Naive thymus-derived CD4-positive, alpha-beta T cell (primary cell): ENCODE measurements at regions of chr16 and their contacts with region 1.

Region 1: DNA sequence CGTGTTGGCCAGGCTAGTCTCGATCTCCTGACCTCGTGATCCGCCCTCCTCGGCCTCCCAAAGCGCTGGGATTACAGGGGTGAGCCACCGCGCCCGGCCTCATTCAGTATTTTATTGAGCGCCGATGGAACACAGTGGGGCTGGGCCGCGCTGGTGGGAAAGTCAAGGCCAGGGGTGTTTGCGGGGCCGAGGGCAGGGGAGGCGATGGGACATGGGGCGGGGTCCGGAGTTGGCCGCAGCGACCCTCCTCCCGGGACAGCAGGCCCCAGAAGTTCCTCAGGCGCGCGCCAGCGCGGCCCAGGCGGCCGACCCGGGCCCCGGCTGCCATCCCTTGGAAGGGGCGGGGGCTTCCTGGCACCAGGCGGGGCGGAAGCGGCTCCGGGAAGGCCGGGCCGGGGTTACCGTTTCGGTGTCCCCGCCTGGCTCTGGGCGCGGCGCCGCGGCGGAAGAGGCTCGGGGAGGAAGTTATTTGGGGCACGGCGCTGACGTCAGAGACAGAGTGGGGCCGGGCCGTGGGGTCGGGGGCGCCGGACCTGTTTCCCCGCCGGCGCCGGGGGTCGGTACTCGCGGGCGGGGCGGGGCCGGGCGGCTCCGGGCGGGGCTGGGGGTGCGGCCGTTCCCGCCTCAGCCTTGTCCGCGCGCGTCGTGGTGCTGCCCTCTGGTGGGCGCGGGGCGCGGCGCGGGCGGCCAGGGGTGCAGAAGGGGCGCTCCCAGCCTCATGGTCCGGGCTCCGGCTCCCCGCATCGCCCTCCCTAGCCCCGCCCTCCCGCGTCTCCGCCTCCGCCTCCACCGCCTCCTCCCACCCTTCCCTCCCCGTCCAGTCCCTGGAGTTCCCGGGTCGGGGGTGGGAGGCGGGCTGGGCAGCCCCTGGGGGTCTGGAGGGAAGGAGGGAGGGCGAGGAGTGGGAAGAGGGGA is 952 bp upstream of the PRSS27 start:
- DNase-seq: peak; percentile 74 to 91 (median 85)
- ATAC-seq: peak; percentile 95
- H3K4me3 ChIP-seq: peak overlapping the region; percentile 37
- H3K4me3 Mint-ChIP-seq: peak overlapping the region; percentile 55 to 82 (median 76)
- H3K27ac ChIP-seq: peak overlapping the region; percentile 74
- H3K27ac Mint-ChIP-seq: peak overlapping the region in 7 of 9 donors; percentile 38 to 90 (median 64)
- H3K4me1 ChIP-seq: no peaks in the 10 kb centered on the region
- H3K4me1 Mint-ChIP-seq: peaks cover 0 to 5% (median 0%) of the 10 kb centered on the region in 7 donors
- H3K27me3 ChIP-seq: no peaks in the 10 kb centered on the region
- H3K27me3 Mint-ChIP-seq: peaks cover 9 to 14% (median 10%) of the 10 kb centered on the region in 5 donors

Region 2: GRCh38 chr16:2531767-2532493 is 189.0 kb before region 1 on chr16:
- CTCF ChIA-PET with region 1: no interaction called
- POLR2A ChIA-PET with region 1: no interaction called
- intact Hi-C with region 1: loop called in 1 of 2 experiments (anchors 1 kb)
- DNase-seq: peak; percentile 94 to 97 (median 96)
- ATAC-seq: peak; percentile 93
- H3K4me3 ChIP-seq: peak overlapping the region; percentile 71
- H3K4me3 Mint-ChIP-seq: peak overlapping the region; percentile 84 to 100 (median 96)
- H3K27ac ChIP-seq: peak overlapping the region; percentile 93
- H3K27ac Mint-ChIP-seq: peak overlapping the region; percentile 96 to 100 (median 98)
- H3K4me1 ChIP-seq: peaks cover 5 to 7% of the 10 kb centered on the region in 2 donors
- H3K4me1 Mint-ChIP-seq: peaks cover 0 to 31% (median 20%) of the 10 kb centered on the region in 7 donors
- H3K27me3 ChIP-seq: no peaks in the 10 kb centered on the region
- H3K27me3 Mint-ChIP-seq: no peaks in the 10 kb centered on the region

Region 3: DNA sequence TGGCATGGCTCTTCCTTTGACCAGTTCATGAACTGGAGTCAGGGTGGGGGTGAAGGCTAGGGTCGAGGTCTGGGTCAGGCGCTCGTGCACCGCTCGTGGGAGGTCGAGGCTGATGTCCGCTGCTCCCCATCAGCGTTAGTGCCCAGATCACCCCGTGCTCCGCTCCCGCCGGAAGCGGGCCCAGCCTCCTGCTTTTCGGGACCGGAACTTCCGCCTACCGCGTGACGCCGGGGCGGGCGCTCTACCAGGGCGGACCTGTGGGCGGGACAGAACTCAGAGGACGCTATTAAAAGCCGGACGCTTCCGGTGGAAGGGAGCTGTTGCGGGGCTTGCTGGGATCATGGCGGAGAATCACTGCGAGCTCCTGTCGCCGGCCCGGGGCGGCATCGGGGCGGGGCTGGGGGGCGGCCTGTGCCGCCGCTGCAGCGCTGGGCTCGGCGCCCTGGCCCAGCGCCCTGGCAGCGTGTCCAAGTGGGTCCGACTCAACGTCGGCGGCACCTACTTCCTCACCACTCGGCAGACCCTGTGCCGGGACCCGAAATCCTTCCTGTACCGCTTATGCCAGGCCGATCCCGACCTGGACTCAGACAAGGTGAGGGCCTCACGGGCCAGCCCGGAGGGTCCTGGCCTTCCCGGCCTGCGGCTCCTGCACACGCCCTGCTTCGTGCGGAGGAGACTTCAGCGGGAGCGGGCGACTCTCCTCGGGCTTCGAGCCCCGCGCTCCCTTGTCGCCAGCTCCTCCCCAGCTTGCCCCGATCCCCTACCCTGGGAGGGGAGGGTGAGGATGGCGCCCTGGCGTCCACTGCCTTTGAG is 38.6 kb before region 1 on chr16 and contains the start of gene KCTD5:
- CTCF ChIA-PET with region 1: no interaction called
- POLR2A ChIA-PET with region 1: interaction called, 4 read pairs
- intact Hi-C with region 1: loop called (anchors 1 kb)
- DNase-seq: peak; percentile 89 to 98 (median 94)
- ATAC-seq: peak; percentile 97
- H3K4me3 ChIP-seq: peak within 1 kb of the TSS; percentile 81
- H3K4me3 Mint-ChIP-seq: peak within 1 kb of the TSS; percentile 89 to 99 (median 94)
- H3K27ac ChIP-seq: peak within 1 kb of the TSS; percentile 92
- H3K27ac Mint-ChIP-seq: peak within 1 kb of the TSS; percentile 82 to 99 (median 94)
- H3K4me1 ChIP-seq: peaks cover 8 to 18% of the 10 kb centered on the region in 2 donors
- H3K4me1 Mint-ChIP-seq: peaks cover 12 to 29% (median 25%) of the 10 kb centered on the region in 7 donors
- H3K27me3 ChIP-seq: no peaks in the 10 kb centered on the region
- H3K27me3 Mint-ChIP-seq: no peaks in the 10 kb centered on the region
- total RNA-seq, gene KCTD5: 21.4 to 37.5 (median 24.6) TPM

Region 4: DNA sequence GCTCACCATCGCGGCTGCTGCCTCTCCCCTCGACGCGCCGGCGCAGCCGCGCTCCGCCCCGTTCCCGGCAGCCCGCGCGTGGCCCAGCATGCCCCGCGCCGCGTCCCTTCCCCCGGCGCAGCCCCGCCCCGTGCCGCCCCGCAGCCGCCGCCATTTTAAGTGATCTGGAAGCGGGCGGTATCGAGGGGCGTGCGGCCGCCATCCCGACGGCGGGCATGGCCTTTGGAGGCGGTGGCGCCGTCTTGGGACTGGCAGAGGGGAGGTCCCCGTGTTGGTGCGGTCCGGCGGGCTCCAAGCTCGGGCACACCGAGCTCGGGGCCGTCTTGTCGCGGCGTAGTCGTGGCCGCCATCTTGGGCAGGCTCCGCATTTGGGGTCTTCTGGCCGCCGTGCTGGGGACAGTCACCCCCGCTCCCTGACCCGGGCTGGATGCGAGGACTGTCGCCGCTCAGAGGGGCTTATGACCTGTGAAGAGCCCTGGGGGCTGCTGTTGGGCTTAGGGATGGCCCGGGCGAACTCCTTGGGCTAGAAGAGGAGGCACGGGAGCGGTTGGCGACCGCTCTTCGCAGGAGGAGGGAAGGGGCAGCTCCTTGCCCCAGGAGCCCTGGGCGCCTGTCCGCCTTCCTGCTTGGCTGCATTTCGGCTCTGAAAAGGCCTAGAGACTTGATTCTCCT is 56.4 kb after region 1 on chr16 and contains the start of gene ELOB:
- CTCF ChIA-PET with region 1: no interaction called
- POLR2A ChIA-PET with region 1: no interaction called
- intact Hi-C with region 1: loop called in 1 of 2 experiments (anchors 1 kb)
- DNase-seq: peak; percentile 81 to 95 (median 90)
- ATAC-seq: peak; percentile 95
- H3K4me3 ChIP-seq: peak within 1 kb of the TSS; percentile 93
- H3K4me3 Mint-ChIP-seq: peak within 1 kb of the TSS; percentile 93 to 97 (median 96)
- H3K27ac ChIP-seq: peak within 1 kb of the TSS; percentile 99
- H3K27ac Mint-ChIP-seq: peak within 1 kb of the TSS; percentile 96 to 99 (median 98)
- H3K4me1 ChIP-seq: peaks cover 19 to 24% of the 10 kb centered on the region in 2 donors
- H3K4me1 Mint-ChIP-seq: peaks cover 20 to 55% (median 38%) of the 10 kb centered on the region in 7 donors
- H3K27me3 ChIP-seq: no peaks in the 10 kb centered on the region
- H3K27me3 Mint-ChIP-seq: no peaks in the 10 kb centered on the region
- total RNA-seq, gene ELOB: 65.3 to 242 (median 99.3) TPM

Region 5: DNA sequence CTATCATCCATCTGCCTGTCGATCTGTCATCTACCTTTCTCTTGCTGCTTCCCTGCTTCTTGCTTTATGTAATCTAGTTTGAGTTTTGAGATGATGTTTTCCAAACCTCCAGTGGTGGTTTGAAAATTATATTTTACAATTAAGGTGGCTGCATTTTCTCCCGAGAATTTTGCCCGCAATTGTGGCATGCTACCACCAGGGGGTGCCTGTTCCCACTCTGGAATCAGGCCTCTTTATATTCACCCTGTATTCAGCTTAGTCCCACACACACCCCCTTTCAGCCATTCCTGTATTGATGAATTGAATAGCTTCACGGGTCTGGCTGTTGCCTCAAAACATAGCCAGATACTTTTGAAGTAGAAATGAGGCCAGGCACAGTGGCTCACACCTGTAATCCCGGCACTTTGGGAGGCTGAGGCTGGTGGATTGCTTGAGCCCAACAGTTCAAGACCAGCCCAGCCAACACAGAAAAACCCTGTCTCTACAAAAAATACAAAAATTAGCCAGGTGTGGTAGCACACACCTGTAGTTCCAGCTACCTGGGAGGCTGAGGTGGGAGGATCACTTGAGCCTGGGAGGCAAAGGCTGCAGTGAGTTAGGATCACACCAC is 133.8 kb after region 1 on chr16:
- CTCF ChIA-PET with region 1: no interaction called
- POLR2A ChIA-PET with region 1: no interaction called
- intact Hi-C with region 1: no loop called
- DNase-seq: no peak
- ATAC-seq: no peak
- H3K4me3 ChIP-seq: no peak overlapping the region
- H3K4me3 Mint-ChIP-seq: no peak overlapping the region
- H3K27ac ChIP-seq: no peak overlapping the region
- H3K27ac Mint-ChIP-seq: no peak overlapping the region
- H3K4me1 ChIP-seq: peaks cover 3 to 12% of the 10 kb centered on the region in 2 donors
- H3K4me1 Mint-ChIP-seq: peaks cover 3 to 13% (median 5%) of the 10 kb centered on the region in 7 donors
- H3K27me3 ChIP-seq: peaks cover 0 to 6% of the 10 kb centered on the region in 2 donors
- H3K27me3 Mint-ChIP-seq: peaks cover 0 to 9% (median 5%) of the 10 kb centered on the region in 5 donors

Region 6: DNA sequence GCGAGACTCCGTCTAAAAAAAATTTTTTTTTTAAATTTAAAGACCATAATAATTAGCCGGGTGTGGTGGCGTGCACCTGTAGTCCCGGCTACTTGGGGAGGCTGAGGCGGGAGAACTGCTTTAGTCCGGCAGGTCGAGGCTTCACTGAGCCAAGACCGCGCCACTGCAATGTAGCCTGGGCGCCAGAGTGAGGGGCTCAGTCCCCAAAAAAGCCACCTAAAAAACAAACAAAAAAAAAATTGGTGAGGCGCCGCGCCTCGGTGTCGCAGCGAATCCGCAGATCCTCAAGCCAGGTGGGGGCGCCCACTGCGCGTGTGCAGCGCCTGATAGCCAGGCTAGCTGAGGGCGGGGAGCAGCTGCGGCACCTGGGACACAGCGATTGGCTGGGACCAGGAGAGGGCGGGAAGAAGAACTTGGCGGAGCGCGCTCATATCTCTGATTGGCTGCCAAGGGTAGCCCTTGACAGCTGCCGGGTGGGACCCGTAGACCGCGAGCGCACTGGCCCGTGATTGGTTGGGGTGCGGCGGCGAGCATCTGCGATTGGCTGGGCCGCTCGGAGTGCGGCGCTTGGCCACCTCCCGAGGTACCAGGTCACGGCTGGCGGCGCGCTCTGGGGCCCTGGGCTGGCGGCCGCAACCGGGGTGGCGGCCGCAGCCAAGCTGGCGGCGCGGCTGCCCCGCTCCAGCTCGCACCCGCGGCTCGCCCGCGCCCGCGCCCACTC is 282.8 kb after region 1 on chr16:
- CTCF ChIA-PET with region 1: no interaction called
- POLR2A ChIA-PET with region 1: no interaction called
- intact Hi-C with region 1: loop called in 1 of 2 experiments (anchors 1 kb)
- DNase-seq: peak; percentile 78 to 98 (median 96)
- ATAC-seq: peak; percentile 99
- H3K4me3 ChIP-seq: no peak overlapping the region
- H3K4me3 Mint-ChIP-seq: peak overlapping the region; percentile 76 to 82 (median 80)
- H3K27ac ChIP-seq: no peak overlapping the region
- H3K27ac Mint-ChIP-seq: peak overlapping the region in 5 of 9 donors; percentile 41 to 81 (median 45)
- H3K4me1 ChIP-seq: peaks cover 19 to 21% of the 10 kb centered on the region in 2 donors
- H3K4me1 Mint-ChIP-seq: peaks cover 18 to 32% (median 25%) of the 10 kb centered on the region in 7 donors
- H3K27me3 ChIP-seq: no peaks in the 10 kb centered on the region
- H3K27me3 Mint-ChIP-seq: peaks cover 0 to 17% (median 0%) of the 10 kb centered on the region in 5 donors

Region 7: DNA sequence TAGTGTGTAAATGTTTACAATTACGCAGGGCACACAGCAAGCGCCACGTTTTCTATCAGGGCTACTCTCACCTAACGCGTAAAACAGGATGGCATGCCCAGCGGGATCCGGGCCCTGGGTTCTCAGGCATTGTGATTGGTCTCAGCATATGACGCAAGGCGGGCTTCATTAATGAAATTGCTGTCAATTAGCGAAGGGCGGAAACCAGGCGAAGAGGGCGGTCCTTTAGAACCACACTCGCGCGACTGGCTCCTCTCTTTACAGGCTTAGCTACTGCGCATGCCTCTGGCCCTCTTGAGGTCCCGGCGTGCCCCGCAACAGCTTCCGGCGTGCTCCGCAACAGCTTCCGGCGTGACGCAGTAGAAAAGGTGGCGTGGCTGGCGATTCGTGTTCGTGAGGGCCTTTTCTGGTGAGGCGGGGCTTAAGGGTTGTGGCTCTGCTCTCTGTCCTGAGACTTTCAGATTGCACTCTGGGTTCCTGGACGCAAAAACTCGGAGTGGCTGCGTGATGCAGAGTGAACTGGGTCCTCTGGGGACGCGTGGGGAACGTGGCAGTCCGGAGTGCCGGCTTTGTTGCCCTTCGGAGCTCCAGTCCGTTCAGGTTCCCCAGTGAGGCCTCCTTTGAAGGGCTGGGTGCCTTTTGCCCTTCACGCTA is 643.9 kb after region 1 on chr16:
- CTCF ChIA-PET with region 1: no interaction called
- POLR2A ChIA-PET with region 1: no interaction called
- intact Hi-C with region 1: no loop called
- DNase-seq: peak; percentile 50 to 92 (median 87)
- ATAC-seq: peak; percentile 93
- H3K4me3 ChIP-seq: peak overlapping the region; percentile 70
- H3K4me3 Mint-ChIP-seq: peak overlapping the region; percentile 37 to 92 (median 84)
- H3K27ac ChIP-seq: peak overlapping the region; percentile 79
- H3K27ac Mint-ChIP-seq: peak overlapping the region; percentile 73 to 96 (median 91)
- H3K4me1 ChIP-seq: peaks cover 0 to 6% of the 10 kb centered on the region in 2 donors
- H3K4me1 Mint-ChIP-seq: peaks cover 0 to 19% (median 12%) of the 10 kb centered on the region in 7 donors
- H3K27me3 ChIP-seq: no peaks in the 10 kb centered on the region
- H3K27me3 Mint-ChIP-seq: peaks cover 0 to 30% (median 21%) of the 10 kb centered on the region in 5 donors